Lower leg skin (tissue), 4 donors: ENCODE measurements at regions of chr6 and their contacts with region 1.

Region 1: DNA sequence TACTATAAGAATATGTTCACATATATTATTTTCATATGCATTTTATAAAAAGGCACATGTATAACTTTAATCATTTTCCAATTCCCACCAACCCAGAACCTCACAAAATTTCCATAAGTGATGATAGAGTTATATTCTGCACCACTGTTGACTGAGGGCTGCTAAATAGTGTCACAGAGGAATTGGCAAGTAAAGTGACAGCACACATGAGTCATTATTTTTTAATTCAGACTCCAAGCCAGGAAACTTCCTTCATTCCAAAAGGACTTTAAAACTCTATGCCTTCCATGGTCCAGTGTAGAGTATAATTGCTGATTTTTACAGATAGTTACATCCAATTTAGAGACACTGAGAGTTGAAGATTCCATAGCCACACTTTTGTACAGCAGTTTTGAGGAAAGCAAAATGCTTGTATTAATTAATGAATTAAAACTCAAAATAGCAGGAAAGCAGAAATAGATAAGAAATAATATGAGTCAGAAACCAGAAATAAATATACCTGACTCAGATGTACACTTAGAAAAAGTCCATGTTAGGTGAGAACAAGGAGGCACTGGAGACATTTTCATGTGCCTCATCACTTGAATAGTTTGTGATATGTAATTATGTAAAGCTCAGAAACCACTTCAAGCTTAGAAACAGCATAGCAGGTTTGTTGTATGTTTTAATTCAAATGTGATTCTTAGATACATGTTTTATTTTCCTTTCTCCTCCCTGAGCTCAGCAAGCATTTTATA is 425.2 kb upstream of the OPRM1 start:
- DNase-seq: no peak
- H3K4me3 ChIP-seq: no peak overlapping the region
- CTCF ChIP-seq: no peak
- POLR2A ChIP-seq: no peak

Region 2: DNA sequence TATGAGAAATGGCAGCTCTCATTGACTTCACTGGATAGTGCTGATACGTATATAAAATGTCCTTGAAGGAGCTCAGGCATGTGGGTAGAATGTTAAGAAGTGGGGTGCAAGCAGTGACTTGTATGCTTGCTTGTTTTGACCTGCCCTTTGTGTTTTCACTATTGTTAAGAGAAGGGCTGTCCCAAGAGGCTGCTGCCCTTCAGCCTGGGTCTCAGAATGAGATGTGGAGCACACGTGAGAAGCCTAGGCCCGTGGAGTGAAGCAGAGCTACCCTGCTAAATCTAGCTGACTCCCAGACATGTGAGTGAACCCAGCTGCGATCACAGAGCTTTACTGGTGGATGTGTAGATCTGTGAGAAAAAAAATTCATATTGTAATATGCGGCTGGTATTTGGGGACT is 177.5 kb before region 1 on chr6:
- intact Hi-C with region 1: no loop called
- DNase-seq: no peak
- H3K4me3 ChIP-seq: no peak overlapping the region
- CTCF ChIP-seq: no peak
- POLR2A ChIP-seq: no peak

Region 3: DNA sequence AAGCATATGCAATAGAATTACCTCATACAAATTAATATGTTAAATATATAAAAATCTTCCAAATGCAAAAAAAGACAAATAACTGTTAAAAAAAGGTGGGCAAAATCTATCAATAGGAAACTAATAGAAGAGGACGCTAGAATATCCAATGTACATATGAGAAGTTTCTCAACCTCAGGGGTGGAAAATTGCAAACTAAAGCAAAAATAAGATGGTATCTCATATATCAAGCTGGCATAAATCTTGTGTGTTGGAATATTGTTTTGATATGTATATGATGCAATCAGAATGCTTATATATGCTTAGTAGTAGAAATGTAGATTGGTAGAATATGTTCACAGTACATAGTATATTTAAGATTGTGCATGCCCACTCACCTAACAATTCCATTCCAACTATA is 30.1 kb after region 1 on chr6:
- intact Hi-C with region 1: loop called (anchors 1 kb)
- DNase-seq: no peak
- H3K4me3 ChIP-seq: no peak overlapping the region
- CTCF ChIP-seq: no peak
- POLR2A ChIP-seq: no peak

Region 4: DNA sequence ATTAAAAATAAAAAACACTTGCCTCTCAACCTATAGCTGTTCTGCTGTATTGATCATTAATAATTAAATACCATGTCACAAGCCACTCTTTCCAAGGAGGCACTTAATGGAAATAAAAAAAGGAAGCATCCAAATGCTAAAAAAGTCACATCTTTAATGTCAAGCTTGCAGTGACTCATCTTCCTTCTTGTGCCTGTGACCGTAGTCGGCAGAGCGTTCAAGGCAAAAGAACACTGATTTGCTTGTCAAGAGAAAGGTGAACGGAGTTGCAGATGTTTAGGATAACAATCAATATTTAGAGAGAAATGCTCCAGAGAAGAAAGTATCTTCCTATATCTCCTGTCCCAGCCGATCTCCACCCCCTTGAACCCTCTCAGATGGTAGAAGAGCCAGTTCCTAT is 84.1 kb after region 1 on chr6:
- intact Hi-C with region 1: no loop called
- DNase-seq: no peak
- H3K4me3 ChIP-seq: no peak overlapping the region
- CTCF ChIP-seq: no peak
- POLR2A ChIP-seq: no peak